Sigmoid colon (tissue), 7 donors: ENCODE measurements at regions of chr20 and their contacts with region 1.

Region 1: DNA sequence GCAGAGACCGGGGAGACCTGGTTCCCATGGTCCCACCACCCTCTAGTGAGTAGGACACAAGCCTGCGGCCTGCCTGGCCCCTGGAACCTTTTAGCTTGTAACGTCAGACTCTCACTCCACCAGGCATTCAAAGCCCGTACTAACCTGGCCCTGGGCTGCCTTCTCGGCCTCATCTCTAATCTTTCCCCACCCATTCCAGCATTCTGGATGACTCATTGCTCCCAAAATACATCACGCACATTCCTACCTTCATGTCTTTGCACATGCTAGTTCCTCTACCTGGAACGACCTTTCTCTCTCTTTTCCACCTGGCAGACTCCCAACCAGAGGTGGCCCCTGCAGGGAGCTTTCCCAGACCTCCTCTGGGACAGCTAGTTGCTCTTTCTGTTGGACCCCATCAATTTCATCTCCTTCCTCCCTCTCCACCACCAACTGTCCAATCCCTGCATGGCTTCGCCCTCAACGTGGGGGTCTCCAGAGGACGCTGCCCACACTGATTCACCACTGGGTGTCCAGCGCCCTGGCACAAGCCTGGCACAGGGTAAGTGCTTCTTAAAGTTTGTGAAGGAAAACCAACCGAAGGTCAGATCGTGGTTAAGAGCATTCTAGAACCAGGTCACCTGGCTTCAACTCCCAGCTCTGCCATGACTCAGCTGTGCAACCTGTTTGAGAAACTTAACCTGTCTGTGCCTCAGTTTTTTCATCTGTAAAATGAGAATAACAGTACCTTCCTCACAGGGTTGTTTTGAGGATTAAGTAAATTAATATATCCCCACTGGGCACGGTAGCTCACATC is 35.2 kb downstream of the JPH2 start:
- DNase-seq: peak; percentile 59
- H3K4me3 ChIP-seq: no peak overlapping the region
- H3K27ac ChIP-seq: peak overlapping the region; percentile 80 to 92 (median 92)
- H3K4me1 ChIP-seq: peaks cover 0 to 83% (median 77%) of the 10 kb centered on the region in 4 donors
- H3K27me3 ChIP-seq: no peaks in the 10 kb centered on the region
- CTCF ChIP-seq: no peak
- EP300 ChIP-seq: peak in 1 of 4 donors; percentile 22
- POLR2A ChIP-seq: no peak

Region 2: GRCh38 chr20:44164479-44164878 is 12.7 kb after region 1 on chr20:
- intact Hi-C with region 1: loop called (anchors 1 kb)
- DNase-seq: no peak
- H3K4me3 ChIP-seq: no peak overlapping the region
- H3K27ac ChIP-seq: peak overlapping the region; percentile 91 to 99 (median 95)
- H3K4me1 ChIP-seq: peaks cover 0 to 55% (median 50%) of the 10 kb centered on the region in 4 donors
- H3K27me3 ChIP-seq: no peaks in the 10 kb centered on the region
- CTCF ChIP-seq: no peak
- EP300 ChIP-seq: no peak
- POLR2A ChIP-seq: no peak